Activated CD8-positive, alpha-beta T cell treated with anti-CD3 and anti-CD28 coated beads for 36 hours (primary cell): ENCODE measurements at regions of chr3 and their contacts with region 1.

Region 1: DNA sequence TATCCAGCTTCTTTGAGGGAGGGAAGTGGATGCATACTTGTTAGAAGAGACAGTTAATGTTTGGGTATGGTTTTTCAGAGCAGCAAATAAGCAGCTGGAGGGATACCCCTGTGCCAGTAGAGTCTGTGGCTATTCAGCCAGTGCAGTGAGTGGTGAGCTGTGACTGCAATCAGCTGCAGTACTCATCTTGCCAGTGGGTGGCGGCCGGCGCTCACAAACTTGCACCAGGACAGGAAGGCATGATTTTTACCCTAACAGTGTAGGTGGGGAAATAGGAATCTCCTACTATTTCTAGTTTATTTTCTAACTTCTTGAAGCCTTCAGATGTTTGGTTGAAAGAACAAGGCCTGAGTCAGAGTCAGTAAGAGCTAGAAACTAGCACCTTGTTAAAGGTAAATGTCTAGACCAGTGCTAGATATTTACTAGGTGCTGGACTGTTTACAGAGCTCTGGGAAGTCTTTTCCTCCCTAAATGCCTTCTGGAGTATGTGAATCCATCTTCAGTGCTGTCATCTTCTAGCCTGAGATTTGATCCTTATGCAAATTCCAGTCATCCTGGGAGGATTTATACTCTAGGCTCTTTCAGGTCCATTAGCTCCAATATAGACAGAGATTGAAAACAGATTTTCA is 23.6 kb downstream of the TIMP4 start:
- DNase-seq: peak; percentile 80
- ATAC-seq: peak; percentile 86
- H3K4me3 Mint-ChIP-seq: no peak overlapping the region
- H3K27ac Mint-ChIP-seq: no peak overlapping the region
- H3K4me1 Mint-ChIP-seq: peaks cover 3% of the 10 kb centered on the region
- H3K27me3 Mint-ChIP-seq: peaks cover 11% of the 10 kb centered on the region
- CTCF ChIP-seq: peak; percentile 81

Region 2: GRCh38 chr3:11989383-11990038 is 145.6 kb before region 1 on chr3:
- CTCF ChIA-PET with region 1: no interaction called
- POLR2A ChIA-PET with region 1: no interaction called
- intact Hi-C with region 1: no loop called
- DNase-seq: no peak
- ATAC-seq: no peak
- H3K4me3 Mint-ChIP-seq: no peak overlapping the region
- H3K27ac Mint-ChIP-seq: no peak overlapping the region
- H3K4me1 Mint-ChIP-seq: no peaks in the 10 kb centered on the region
- H3K27me3 Mint-ChIP-seq: peaks cover 19% of the 10 kb centered on the region
- CTCF ChIP-seq: no peak

Region 3: DNA sequence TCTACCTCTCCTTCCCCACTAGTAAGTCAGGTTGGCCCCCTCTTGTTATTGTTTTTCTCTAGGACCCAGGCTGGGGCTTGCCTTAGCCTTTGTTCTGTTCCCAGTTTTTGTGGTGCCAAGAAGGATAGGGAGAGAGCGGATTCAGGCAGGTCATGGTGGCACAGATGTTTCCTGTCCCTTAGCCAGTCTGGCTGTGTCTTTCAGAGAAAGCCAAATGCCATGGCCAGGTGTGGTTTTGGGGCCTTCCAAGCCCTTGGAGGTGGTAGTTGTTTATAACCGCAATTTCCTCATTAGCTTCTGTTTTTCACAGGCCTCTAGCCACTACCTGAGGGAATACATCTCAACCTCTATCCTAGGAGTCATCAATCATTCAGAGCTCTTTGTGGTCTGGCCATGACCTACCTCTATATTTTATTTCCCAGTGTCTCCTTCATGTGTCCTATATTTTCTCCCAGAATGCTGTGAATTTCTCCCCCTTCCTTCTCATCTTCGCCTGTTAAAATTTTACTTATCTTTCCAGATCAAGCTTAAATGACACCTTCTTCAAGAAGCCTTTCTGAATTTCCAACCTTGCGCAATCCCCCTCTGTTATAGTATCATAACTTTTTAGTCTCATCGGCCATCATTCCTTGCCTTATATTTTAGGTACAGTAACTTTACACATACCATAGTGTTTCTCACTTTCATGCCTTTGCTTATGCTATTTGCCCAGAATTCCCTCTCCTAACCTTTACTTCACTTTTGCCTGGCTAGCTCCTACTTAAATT is 14.6 kb before region 1 on chr3:
- CTCF ChIA-PET with region 1: interaction called, 10 read pairs
- POLR2A ChIA-PET with region 1: no interaction called
- intact Hi-C with region 1: no loop called
- DNase-seq: no peak
- ATAC-seq: no peak
- H3K4me3 Mint-ChIP-seq: no peak overlapping the region
- H3K27ac Mint-ChIP-seq: no peak overlapping the region
- H3K4me1 Mint-ChIP-seq: peaks cover 5% of the 10 kb centered on the region
- H3K27me3 Mint-ChIP-seq: peaks cover 25% of the 10 kb centered on the region
- CTCF ChIP-seq: no peak

Region 4: GRCh38 chr3:12175844-12176453 is 40.8 kb after region 1 on chr3:
- CTCF ChIA-PET with region 1: interaction called, 85 read pairs
- POLR2A ChIA-PET with region 1: no interaction called
- intact Hi-C with region 1: loop called (anchors 2 kb)
- DNase-seq: peak; percentile 68
- ATAC-seq: peak; percentile 68
- H3K4me3 Mint-ChIP-seq: no peak overlapping the region
- H3K27ac Mint-ChIP-seq: no peak overlapping the region
- H3K4me1 Mint-ChIP-seq: peaks cover 14% of the 10 kb centered on the region
- H3K27me3 Mint-ChIP-seq: peaks cover 1% of the 10 kb centered on the region
- CTCF ChIP-seq: peak; percentile 78

Region 5: GRCh38 chr3:12194669-12195161 is 59.6 kb after region 1 on chr3:
- CTCF ChIA-PET with region 1: interaction called, 12 read pairs
- POLR2A ChIA-PET with region 1: no interaction called
- intact Hi-C with region 1: no loop called
- DNase-seq: peak; percentile 58
- ATAC-seq: peak; percentile 26
- H3K4me3 Mint-ChIP-seq: peak overlapping the region; percentile 49
- H3K27ac Mint-ChIP-seq: peak overlapping the region; percentile 92
- H3K4me1 Mint-ChIP-seq: peaks cover 68% of the 10 kb centered on the region
- H3K27me3 Mint-ChIP-seq: peaks cover 5% of the 10 kb centered on the region
- CTCF ChIP-seq: no peak

Region 6: GRCh38 chr3:12275974-12276650 is 141.0 kb after region 1 on chr3:
- CTCF ChIA-PET with region 1: no interaction called
- POLR2A ChIA-PET with region 1: no interaction called
- intact Hi-C with region 1: no loop called
- DNase-seq: no peak
- ATAC-seq: no peak
- H3K4me3 Mint-ChIP-seq: no peak overlapping the region
- H3K27ac Mint-ChIP-seq: no peak overlapping the region
- H3K4me1 Mint-ChIP-seq: no peaks in the 10 kb centered on the region
- H3K27me3 Mint-ChIP-seq: peaks cover 21% of the 10 kb centered on the region
- CTCF ChIP-seq: no peak

Region 7: GRCh38 chr3:12484198-12484974 is 349.2 kb after region 1 on chr3 and contains the start of gene TSEN2:
- CTCF ChIA-PET with region 1: interaction called, 170 read pairs
- POLR2A ChIA-PET with region 1: interaction called, 3 read pairs
- intact Hi-C with region 1: loop called (anchors 1 kb)
- DNase-seq: peak; percentile 95
- ATAC-seq: peak; percentile 97
- H3K4me3 Mint-ChIP-seq: peak within 1 kb of the TSS; percentile 92
- H3K27ac Mint-ChIP-seq: peak within 1 kb of the TSS; percentile 93
- H3K4me1 Mint-ChIP-seq: peaks cover 37% of the 10 kb centered on the region
- H3K27me3 Mint-ChIP-seq: no peaks in the 10 kb centered on the region
- CTCF ChIP-seq: no peak
- total RNA-seq, gene TSEN2: 19.4 to 21.4 TPM